Panc1 (cell line): ENCODE measurements at regions of chr3 and their contacts with region 1.

Region 1: DNA sequence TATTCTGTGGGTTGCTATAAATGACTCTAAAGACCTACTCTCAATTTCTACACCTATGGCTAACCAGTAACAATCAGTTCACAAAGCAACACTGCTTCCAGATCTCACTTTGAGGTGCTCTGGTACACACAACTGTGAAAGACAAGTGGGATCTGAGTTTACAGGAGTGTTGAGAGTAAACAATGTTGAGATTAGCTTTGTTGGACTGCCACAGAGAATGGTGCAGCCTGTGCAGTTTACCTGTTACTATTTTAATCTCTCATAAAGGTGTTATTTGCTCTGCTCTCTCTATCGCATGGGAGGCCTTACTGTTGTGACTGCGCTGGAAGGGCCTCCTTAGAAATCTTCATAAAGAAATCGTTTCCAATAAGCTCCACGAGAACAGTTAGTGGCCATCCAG is 112.0 kb downstream of the SOX2 start:
- DNase-seq: no peak
- ATAC-seq: no peak
- H3K4me3 ChIP-seq: no peak overlapping the region
- H3K27ac ChIP-seq: no peak overlapping the region
- H3K4me1 ChIP-seq: no peaks in the 10 kb centered on the region
- H3K27me3 ChIP-seq: no peaks in the 10 kb centered on the region
- CTCF ChIP-seq: no peak

Region 2: GRCh38 chr3:181610083-181610972 is 213.4 kb before region 1 on chr3:
- CTCF ChIA-PET with region 1: no interaction called
- POLR2A ChIA-PET with region 1: no interaction called
- in situ Hi-C with region 1: no loop called
- intact Hi-C with region 1: no loop called
- DNase-seq: no peak
- ATAC-seq: no peak
- H3K4me3 ChIP-seq: no peak overlapping the region
- H3K27ac ChIP-seq: no peak overlapping the region
- H3K4me1 ChIP-seq: no peaks in the 10 kb centered on the region
- H3K27me3 ChIP-seq: no peaks in the 10 kb centered on the region
- CTCF ChIP-seq: no peak

Region 3: GRCh38 chr3:181709537-181710279 is 114.0 kb before region 1 on chr3:
- CTCF ChIA-PET with region 1: no interaction called
- POLR2A ChIA-PET with region 1: no interaction called
- in situ Hi-C with region 1: no loop called
- intact Hi-C with region 1: no loop called
- DNase-seq: no peak
- ATAC-seq: no peak
- H3K4me3 ChIP-seq: peak overlapping the region in 1 of 2 experiments; percentile 34; a peak in 2 of 4 replicates
- H3K27ac ChIP-seq: no peak overlapping the region
- H3K4me1 ChIP-seq: peaks cover 4% of the 10 kb centered on the region; the same call in 1 of the 2 replicates
- H3K27me3 ChIP-seq: peaks cover 40% of the 10 kb centered on the region
- CTCF ChIP-seq: peak; percentile 95

Region 4: GRCh38 chr3:182052332-182052731 is 228.6 kb after region 1 on chr3:
- CTCF ChIA-PET with region 1: no interaction called
- POLR2A ChIA-PET with region 1: interaction called, 16 read pairs
- in situ Hi-C with region 1: no loop called
- intact Hi-C with region 1: no loop called
- DNase-seq: no peak
- ATAC-seq: no peak
- H3K4me3 ChIP-seq: no peak overlapping the region
- H3K27ac ChIP-seq: no peak overlapping the region
- H3K4me1 ChIP-seq: no peaks in the 10 kb centered on the region
- H3K27me3 ChIP-seq: no peaks in the 10 kb centered on the region
- CTCF ChIP-seq: no peak

Region 5: GRCh38 chr3:182067423-182067822 is 243.7 kb after region 1 on chr3:
- CTCF ChIA-PET with region 1: no interaction called
- POLR2A ChIA-PET with region 1: no interaction called
- in situ Hi-C with region 1: no loop called
- intact Hi-C with region 1: no loop called
- DNase-seq: no peak
- ATAC-seq: no peak
- H3K4me3 ChIP-seq: no peak overlapping the region
- H3K27ac ChIP-seq: no peak overlapping the region
- H3K4me1 ChIP-seq: no peaks in the 10 kb centered on the region
- H3K27me3 ChIP-seq: no peaks in the 10 kb centered on the region; the same call in 1 of the 2 replicates
- CTCF ChIP-seq: no peak